ENCODE measurements at regions of chr1 and their contacts with region 1.

Region 1: DNA sequence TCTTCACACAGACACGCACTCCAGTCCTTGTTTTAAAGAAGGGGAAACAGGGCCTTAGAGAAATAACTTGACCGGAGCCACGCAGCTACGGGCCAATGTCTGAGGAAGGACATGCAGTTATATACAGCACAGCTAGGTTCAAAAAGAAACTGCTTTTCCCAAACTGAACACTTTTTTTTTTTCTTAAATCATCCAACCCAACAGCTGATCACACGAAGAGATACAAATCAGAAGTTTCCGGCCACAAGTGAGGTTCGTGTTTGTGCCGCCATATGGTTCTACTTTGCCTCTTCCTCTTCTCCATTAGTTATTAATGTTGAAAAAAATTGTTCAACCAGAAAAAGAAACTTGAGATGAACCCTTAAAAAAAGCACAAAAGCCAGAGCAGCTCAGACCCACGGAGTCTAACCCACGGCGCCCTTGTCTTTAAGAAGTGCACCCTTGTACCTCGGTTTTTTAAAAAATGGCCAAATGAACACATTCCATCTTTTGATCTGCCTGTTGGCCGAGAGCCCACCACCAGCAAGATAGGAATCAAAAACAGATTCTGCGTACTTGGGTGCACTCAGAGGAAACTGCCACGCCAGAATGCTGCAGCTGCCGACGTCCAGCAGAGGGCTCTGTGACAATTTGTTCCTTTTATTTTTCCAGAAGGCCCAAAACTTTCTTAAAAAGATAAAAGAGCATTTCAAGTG is 78.9 kb downstream of the SLC66A1 start:
- DNase-seq: no peak
- ATAC-seq: peak; percentile 82
- H3K4me3 Mint-ChIP-seq: peak overlapping the region; percentile 83
- H3K27ac Mint-ChIP-seq: peak overlapping the region; percentile 95
- H3K4me1 Mint-ChIP-seq: peaks cover 80% of the 10 kb centered on the region
- H3K27me3 Mint-ChIP-seq: no peaks in the 10 kb centered on the region
- CTCF ChIP-seq: no peak

Region 2: GRCh38 chr1:19341201-19342072 is 49.6 kb before region 1 on chr1:
- CTCF ChIA-PET with region 1: interaction called, 3 read pairs
- POLR2A ChIA-PET with region 1: no interaction called
- intact Hi-C with region 1: loop called (anchors 10 kb)
- DNase-seq: peak; percentile 64
- ATAC-seq: peak; percentile 85
- H3K4me3 Mint-ChIP-seq: no peak overlapping the region
- H3K27ac Mint-ChIP-seq: peak overlapping the region; percentile 35
- H3K4me1 Mint-ChIP-seq: no peaks in the 10 kb centered on the region
- H3K27me3 Mint-ChIP-seq: no peaks in the 10 kb centered on the region
- CTCF ChIP-seq: no peak

Region 3: DNA sequence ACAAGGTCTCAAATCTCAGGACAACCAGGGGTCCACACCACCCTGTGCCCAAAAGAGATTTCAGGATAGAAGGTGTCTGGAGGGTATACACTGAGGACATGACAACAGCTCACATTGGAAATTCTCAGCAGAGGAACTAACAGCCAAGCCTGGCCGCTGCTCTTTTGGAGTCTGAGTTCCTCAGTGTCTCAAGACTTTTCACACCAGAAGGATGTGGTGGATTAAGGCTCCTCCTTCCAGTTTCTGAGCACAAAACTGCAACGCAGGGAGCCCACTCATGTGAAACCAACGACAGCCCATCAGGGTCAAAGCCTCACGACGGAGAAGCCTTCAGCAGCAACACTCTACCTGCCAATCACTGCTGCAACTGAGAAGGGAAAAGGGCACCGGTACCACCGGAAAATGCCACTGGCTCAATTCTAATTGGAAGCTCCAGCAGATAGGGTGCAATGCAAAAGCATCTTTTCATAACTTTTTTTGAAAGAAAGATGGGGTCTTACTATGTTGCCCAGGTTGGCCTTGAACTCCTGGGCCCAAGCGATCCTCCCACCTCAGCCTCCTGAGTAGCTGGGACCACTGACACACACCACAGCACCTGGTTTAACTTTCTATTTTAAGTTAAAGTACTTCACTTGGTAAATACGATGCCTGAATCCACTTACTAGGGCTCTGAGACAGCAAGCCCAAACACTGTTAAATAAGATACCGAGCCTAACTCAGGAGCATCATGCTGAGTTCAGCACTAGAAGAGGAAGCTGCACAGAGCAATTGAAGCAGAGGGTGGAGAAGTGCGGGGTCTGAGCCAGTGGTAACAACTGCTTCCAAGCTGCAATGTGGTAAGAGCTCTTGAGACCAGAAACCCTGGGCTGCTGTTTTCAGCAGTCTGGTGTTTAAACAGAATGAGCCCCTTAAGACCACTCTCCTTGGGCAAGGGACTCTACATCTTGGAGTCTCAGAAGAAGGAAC is 86.5 kb after region 1 on chr1:
- CTCF ChIA-PET with region 1: interaction called, 3 read pairs
- POLR2A ChIA-PET with region 1: interaction called, 4 read pairs
- intact Hi-C with region 1: loop called (anchors 2 kb)
- DNase-seq: no peak
- ATAC-seq: peak; percentile 74
- H3K4me3 Mint-ChIP-seq: peak overlapping the region; percentile 76
- H3K27ac Mint-ChIP-seq: peak overlapping the region; percentile 93
- H3K4me1 Mint-ChIP-seq: peaks cover 93% of the 10 kb centered on the region
- H3K27me3 Mint-ChIP-seq: no peaks in the 10 kb centered on the region
- CTCF ChIP-seq: no peak

Region 4: DNA sequence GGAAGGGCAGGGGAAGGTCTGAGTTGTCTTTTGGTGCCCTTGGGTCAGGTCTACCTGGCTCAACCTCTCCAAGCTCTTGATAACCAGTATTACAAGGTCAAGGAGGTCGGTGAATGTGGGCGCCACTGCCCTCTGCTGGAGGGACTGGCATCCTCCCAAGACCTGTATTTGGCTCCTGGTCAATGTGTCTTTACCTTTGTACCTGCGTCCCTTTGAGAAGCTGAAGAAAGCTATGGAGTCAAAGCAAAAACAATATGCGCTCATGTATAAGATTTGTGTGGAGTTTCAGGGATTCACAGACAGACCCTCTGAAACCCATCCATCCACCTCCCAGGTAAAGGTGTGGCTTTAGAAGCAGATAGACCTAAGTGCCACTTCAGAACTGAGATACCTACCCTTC is 191.3 kb after region 1 on chr1:
- CTCF ChIA-PET with region 1: interaction called, 49 read pairs
- POLR2A ChIA-PET with region 1: no interaction called
- intact Hi-C with region 1: loop called (anchors 1 kb)
- DNase-seq: peak; percentile 63
- ATAC-seq: peak; percentile 88
- H3K4me3 Mint-ChIP-seq: no peak overlapping the region
- H3K27ac Mint-ChIP-seq: no peak overlapping the region
- H3K4me1 Mint-ChIP-seq: peaks cover 9% of the 10 kb centered on the region
- H3K27me3 Mint-ChIP-seq: no peaks in the 10 kb centered on the region
- CTCF ChIP-seq: no peak

Region 5: GRCh38 chr1:19651141-19651737 is 260.2 kb after region 1 on chr1:
- CTCF ChIA-PET with region 1: interaction called, 8 read pairs
- POLR2A ChIA-PET with region 1: no interaction called
- intact Hi-C with region 1: loop called (anchors 1 kb)
- DNase-seq: no peak
- ATAC-seq: peak; percentile 65
- H3K4me3 Mint-ChIP-seq: no peak overlapping the region
- H3K27ac Mint-ChIP-seq: no peak overlapping the region
- H3K4me1 Mint-ChIP-seq: peaks cover 4% of the 10 kb centered on the region
- H3K27me3 Mint-ChIP-seq: peaks cover 28% of the 10 kb centered on the region
- CTCF ChIP-seq: no peak